ENCODE measurements at regions of chr16 and their contacts with region 1.

Region 1: DNA sequence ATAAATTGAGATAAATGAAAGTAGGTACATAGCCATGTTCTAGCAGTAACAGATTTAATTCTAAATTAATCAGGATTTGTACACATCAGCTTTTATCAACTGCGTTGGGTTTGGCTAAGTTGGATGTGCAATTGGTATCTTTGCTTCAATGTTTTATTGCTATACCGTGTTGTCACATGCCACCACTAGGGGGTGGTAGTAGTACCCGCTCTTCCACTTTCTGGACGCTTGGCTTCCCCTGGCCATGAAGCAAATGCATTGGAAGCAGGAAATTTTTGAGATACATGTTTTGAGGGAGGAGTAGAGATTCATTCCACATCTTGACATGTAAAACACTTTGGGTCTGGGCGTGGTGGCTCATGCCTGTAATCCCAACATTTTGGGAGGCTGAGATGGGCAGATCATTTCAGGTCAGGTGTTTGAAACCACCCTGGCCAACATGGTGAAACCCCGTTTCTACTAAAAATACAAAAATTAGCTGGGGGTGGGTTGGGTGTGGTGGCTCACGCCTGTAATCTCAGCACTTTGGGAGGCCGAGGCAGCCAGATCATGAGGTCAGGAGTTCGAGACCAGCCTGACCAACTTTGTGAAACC is 58.6 kb downstream of the EMP2 start:
- DNase-seq: peak; percentile 52
- ATAC-seq: peak; percentile 88
- H3K4me3 ChIP-seq: no peak overlapping the region
- H3K27ac ChIP-seq: no peak overlapping the region
- H3K4me1 ChIP-seq: no peaks in the 10 kb centered on the region
- H3K27me3 ChIP-seq: no peaks in the 10 kb centered on the region
- CTCF ChIP-seq: peak; percentile 90

Region 2: GRCh38 chr16:10579965-10580882 is 58.4 kb after region 1 on chr16 and contains the start of gene EMP2:
- CTCF ChIA-PET with region 1: interaction called, 5 read pairs
- POLR2A ChIA-PET with region 1: no interaction called
- in situ Hi-C with region 1: no loop called
- intact Hi-C with region 1: loop called (anchors 10 kb)
- DNase-seq: no peak
- ATAC-seq: peak; percentile 93
- H3K4me3 ChIP-seq: peak within 1 kb of the TSS; percentile 60 to 68
- H3K27ac ChIP-seq: peak within 1 kb of the TSS; percentile 52; the same call in 1 of the 2 replicates
- H3K4me1 ChIP-seq: peaks cover 7% of the 10 kb centered on the region; the same call in 1 of the 2 replicates
- H3K27me3 ChIP-seq: peaks cover 8% of the 10 kb centered on the region
- CTCF ChIP-seq: peak; percentile 87
- total RNA-seq, gene EMP2: 13.8 TPM

Region 3: DNA sequence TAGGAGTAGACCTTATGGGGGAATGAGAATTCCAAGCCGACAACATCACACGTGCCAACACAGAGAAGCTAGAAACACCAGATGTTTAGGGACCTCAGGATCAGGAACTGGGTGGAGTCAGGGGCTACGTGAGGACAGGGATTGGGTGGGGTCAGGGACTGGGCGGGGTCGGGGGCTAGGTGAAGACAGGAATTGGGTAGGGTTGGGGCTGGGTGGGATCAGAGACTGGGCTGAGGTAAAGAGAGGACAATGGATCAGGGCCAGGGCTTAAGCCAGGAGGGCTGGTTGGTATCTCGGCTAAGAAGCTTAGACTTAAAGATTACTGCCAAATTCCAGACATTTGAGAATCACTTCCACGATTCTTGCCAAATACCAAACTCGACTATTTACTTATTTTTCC is 161.4 kb after region 1 on chr16:
- CTCF ChIA-PET with region 1: no interaction called
- POLR2A ChIA-PET with region 1: no interaction called
- in situ Hi-C with region 1: no loop called
- intact Hi-C with region 1: no loop called
- DNase-seq: no peak
- ATAC-seq: no peak
- H3K4me3 ChIP-seq: no peak overlapping the region
- H3K27ac ChIP-seq: no peak overlapping the region
- H3K4me1 ChIP-seq: no peaks in the 10 kb centered on the region
- H3K27me3 ChIP-seq: no peaks in the 10 kb centered on the region
- CTCF ChIP-seq: no peak

Region 4: DNA sequence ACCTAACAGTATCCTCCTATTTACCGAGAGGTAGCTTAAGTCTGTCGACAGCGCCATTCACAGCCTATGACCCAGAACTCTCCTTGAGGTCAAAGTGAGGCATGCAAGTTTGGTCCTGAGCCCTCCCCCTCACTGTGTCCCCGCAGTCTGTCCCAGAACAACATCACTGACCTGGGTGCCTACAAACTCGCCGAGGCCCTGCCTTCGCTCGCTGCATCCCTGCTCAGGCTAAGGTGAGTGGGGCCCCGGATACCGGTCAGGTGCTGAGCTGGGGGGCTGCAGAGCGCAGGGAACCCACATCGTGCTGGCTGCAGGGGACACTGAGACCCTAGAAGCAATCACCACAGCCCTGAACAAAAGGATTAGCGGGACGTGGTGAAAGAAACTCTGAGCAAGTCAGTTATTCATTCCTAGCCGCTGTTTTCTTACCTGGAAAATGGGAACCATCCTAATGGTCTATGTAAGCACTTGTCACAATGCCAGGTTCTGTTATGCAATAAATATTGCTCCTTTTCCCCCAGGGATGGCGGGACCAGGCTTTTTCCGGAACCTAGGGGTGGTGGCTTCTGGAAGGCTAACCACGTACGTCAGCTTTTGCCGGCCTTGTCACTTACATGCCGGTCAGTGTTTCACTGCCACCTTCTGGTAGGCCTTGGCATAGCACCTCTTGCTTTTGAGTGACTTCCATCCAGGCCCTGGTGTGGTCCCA is 396.7 kb after region 1 on chr16:
- CTCF ChIA-PET with region 1: no interaction called
- POLR2A ChIA-PET with region 1: no interaction called
- in situ Hi-C with region 1: no loop called
- intact Hi-C with region 1: loop called (anchors 10 kb)
- DNase-seq: peak; percentile 94
- ATAC-seq: peak; percentile 94
- H3K4me3 ChIP-seq: no peak overlapping the region
- H3K27ac ChIP-seq: no peak overlapping the region
- H3K4me1 ChIP-seq: peaks cover 4% of the 10 kb centered on the region; the same call in 1 of the 2 replicates
- H3K27me3 ChIP-seq: no peaks in the 10 kb centered on the region
- CTCF ChIP-seq: peak; percentile 97

Measured in Panc1 (cell line).